ENCODE measurements at regions of chr3 and their contacts with region 1.

Region 1: DNA sequence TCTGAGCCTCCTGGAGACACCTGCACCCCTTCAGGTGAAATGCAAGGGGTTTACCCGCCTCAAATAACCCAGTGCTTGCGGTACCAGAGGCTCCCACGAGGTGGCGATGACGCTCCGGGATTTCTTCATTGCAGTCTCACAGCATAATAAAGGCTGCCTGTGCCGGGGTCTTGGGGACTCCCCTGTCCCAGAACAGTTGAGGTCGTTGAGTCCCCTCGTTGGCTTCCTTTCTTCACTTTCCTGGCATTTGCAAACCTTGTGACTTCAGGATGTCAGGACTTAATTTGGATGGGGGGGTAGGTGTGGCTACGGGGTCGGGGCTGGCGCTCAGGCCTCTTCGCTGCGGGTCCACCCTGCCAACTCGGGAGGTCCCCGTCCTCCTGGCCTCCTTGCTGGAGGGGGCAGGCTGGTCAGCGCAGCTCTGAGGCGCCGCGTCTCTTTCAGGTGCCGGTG is 1.3 kb downstream of the GNAT1 start:
- DNase-seq: peak; percentile 15
- H3K4me3 ChIP-seq: no peak overlapping the region
- H3K27ac ChIP-seq: no peak overlapping the region
- H3K27me3 ChIP-seq: peaks cover 36% of the 10 kb centered on the region
- CTCF ChIP-seq: peak; percentile 93

Region 2: GRCh38 chr3:50121416-50122032 is 71.2 kb before region 1 on chr3:
- CTCF ChIA-PET with region 1: interaction called, 154 read pairs
- POLR2A ChIA-PET with region 1: interaction called, 12 read pairs
- DNase-seq: peak; percentile 66
- H3K4me3 ChIP-seq: no peak overlapping the region
- H3K27ac ChIP-seq: no peak overlapping the region
- H3K27me3 ChIP-seq: no peaks in the 10 kb centered on the region
- CTCF ChIP-seq: peak; percentile 79

Region 3: GRCh38 chr3:50163572-50164455 is 28.9 kb before region 1 on chr3:
- CTCF ChIA-PET with region 1: interaction called, 13 read pairs
- POLR2A ChIA-PET with region 1: no interaction called
- DNase-seq: peak; percentile 76
- H3K4me3 ChIP-seq: no peak overlapping the region
- H3K27ac ChIP-seq: peak overlapping the region; percentile 55
- H3K27me3 ChIP-seq: no peaks in the 10 kb centered on the region
- CTCF ChIP-seq: no peak

Region 4: DNA sequence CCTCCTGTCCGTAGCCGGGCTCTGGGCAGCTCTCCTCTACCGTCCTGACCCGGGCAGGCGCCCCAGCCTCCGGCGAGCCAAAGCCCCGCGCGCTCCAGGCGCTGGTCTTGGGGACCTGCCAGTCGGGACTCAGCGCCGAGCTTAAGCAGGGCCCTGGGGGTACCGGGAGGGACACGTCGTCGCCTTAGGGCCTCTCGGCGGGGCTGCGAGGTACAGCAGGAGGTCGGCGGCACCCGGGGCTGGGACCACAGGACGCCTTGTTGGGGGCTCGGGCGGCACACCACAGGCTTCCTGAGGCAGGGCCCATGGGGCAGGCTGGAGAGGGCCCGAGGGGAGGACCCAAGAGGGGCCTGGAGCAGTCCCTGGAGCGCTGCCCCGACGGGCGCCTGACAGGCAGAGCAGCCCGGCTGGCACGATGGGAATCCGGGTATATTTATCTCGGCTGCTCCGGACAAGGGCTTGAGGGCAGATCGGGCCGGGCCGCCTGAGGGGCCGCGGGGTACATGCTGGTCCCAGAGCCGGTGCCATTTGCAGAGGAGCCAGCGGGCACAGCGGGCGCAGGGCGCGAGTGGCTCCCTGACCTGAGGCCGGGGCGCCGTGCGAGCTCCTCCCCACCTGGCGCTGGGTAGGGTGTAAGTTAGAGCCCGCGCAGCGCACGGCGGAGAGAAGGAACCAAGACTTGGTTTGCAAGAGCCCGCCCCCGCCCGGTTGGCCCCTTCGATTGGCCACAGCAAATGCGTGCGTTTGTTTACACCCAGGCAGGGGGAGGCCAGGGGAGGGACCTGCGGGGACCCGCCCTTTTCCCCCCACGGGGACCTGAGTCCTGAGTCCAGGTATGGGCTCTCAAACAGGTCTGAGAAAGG is 12.9 kb after region 1 on chr3:
- CTCF ChIA-PET with region 1: interaction called, 46 read pairs
- POLR2A ChIA-PET with region 1: no interaction called
- DNase-seq: no peak
- H3K4me3 ChIP-seq: peak overlapping the region; percentile 46
- H3K27ac ChIP-seq: no peak overlapping the region
- H3K27me3 ChIP-seq: peaks cover 55% of the 10 kb centered on the region
- CTCF ChIP-seq: no peak

Region 5: DNA sequence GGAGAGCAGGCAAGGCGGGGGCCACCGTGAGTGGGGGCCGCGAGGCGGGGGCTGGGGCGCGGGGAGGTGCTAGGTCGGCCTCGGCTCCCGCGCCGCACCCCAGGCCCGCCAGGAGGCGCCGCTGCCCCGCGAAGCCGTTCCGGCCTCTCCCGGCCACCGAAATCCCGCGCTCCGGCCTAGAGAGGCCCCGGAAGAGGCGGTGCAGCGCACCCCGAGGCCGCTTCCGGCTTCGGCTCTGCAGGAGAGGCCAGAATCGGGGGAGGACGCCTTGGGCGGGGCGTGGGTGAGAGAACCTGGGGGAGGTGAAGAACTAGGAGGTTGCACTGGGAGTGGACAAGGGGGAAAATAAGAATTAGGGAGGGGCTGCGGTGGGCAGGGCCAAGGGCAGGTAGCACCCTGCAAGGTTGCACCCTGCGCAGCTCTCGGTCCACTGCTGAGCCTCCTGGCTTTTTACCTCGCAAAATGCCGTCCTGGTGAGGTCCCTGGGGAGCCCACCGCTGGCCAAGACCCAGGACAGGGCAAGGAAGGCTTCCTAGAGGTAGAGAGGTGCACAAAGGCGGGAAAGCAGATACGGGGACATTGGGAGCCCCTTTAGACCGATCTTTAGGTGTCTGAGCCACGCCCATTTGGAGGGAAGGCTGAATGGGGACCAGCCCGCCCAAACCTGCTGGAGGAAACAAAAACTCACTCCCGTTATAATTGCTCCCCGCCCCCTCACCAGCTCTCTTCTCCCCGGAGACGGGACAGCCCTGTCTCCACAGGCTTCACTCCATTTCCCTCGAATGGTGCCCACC is 34.9 kb after region 1 on chr3:
- CTCF ChIA-PET with region 1: interaction called, 324 read pairs
- POLR2A ChIA-PET with region 1: interaction called, 7 read pairs
- DNase-seq: peak; percentile 55
- H3K4me3 ChIP-seq: peak overlapping the region; percentile 83
- H3K27ac ChIP-seq: no peak overlapping the region
- H3K27me3 ChIP-seq: peaks cover 10% of the 10 kb centered on the region
- CTCF ChIP-seq: peak; percentile 64

Region 6: GRCh38 chr3:50245831-50246516 is 53.3 kb after region 1 on chr3:
- CTCF ChIA-PET with region 1: interaction called, 18 read pairs
- POLR2A ChIA-PET with region 1: interaction called, 4 read pairs
- DNase-seq: no peak
- H3K4me3 ChIP-seq: peak overlapping the region; percentile 49
- H3K27ac ChIP-seq: peak overlapping the region; percentile 91
- H3K27me3 ChIP-seq: no peaks in the 10 kb centered on the region
- CTCF ChIP-seq: peak; percentile 97

Region 7: GRCh38 chr3:50327943-50328691 is 135.4 kb after region 1 on chr3 and contains the start of gene TUSC2:
- CTCF ChIA-PET with region 1: interaction called, 15 read pairs
- POLR2A ChIA-PET with region 1: no interaction called
- DNase-seq: peak; percentile 82
- H3K4me3 ChIP-seq: peak within 1 kb of the TSS; percentile 87
- H3K27ac ChIP-seq: peak within 1 kb of the TSS; percentile 73
- H3K27me3 ChIP-seq: no peaks in the 10 kb centered on the region
- CTCF ChIP-seq: no peak
- polyA plus RNA-seq, gene TUSC2: 25.3 and 28.1 TPM in 2 replicates